Heart right ventricle (tissue), 16 donors: ENCODE measurements at regions of chr9 and their contacts with region 1.

Region 1: GRCh38 chr9:31824860-31825259 is 559.6 kb upstream of the ACO1 start:
- DNase-seq: no peak
- ATAC-seq: no peak
- H3K4me3 ChIP-seq: no peak overlapping the region
- H3K27ac ChIP-seq: no peak overlapping the region
- H3K4me1 ChIP-seq: no peaks in the 10 kb centered on the region
- H3K27me3 ChIP-seq: no peaks in the 10 kb centered on the region
- CTCF ChIP-seq: no peak

Region 2: GRCh38 chr9:31597977-31598376 is 226.9 kb before region 1 on chr9:
- intact Hi-C with region 1: no loop called
- DNase-seq: no peak
- ATAC-seq: no peak
- H3K4me3 ChIP-seq: no peak overlapping the region
- H3K27ac ChIP-seq: no peak overlapping the region
- H3K4me1 ChIP-seq: no peaks in the 10 kb centered on the region
- H3K27me3 ChIP-seq: no peaks in the 10 kb centered on the region
- CTCF ChIP-seq: no peak

Region 3: DNA sequence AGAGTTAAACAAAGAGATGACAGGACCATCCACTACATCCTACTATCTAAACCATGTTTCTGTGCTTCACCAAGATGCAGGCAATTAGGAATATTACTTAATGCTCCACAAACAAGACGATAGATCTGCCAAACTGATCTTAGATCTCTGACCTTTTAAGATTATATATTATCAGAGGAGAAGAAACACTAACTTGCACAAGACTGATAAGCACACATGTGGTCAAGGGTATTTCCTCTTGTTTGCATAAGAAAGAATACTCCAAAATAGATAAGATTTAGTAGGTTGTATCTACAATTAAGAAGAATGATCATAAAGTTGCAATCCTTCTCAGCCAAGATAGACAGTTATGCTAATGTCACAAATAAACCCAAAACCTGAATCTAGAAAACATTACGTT is 41.4 kb before region 1 on chr9:
- intact Hi-C with region 1: loop called in 1 of 10 experiments (anchors 5 kb)
- DNase-seq: no peak
- ATAC-seq: no peak
- H3K4me3 ChIP-seq: no peak overlapping the region
- H3K27ac ChIP-seq: no peak overlapping the region
- H3K4me1 ChIP-seq: no peaks in the 10 kb centered on the region
- H3K27me3 ChIP-seq: no peaks in the 10 kb centered on the region
- CTCF ChIP-seq: no peak

Region 4: DNA sequence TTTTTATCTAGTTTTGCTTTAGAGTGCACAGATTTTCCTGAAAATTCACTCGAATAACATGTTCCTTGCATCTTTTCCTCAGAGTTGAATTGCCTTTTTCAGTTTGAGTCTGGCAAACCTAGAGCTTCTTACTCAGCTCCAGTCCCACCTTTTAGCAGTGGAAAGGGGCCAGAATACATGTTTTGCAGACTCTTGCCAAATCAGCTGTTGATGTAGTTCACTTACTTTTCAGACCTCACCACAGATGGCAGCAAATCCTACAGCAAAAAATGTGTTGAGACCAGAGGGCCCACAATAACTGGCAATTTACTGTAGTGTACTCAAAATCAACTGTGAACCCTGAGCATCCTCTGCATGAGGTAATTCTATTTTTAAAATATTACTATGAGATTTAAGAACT is 14.4 kb after region 1 on chr9:
- intact Hi-C with region 1: loop called in 1 of 10 experiments (anchors 2 kb)
- DNase-seq: no peak
- ATAC-seq: no peak
- H3K4me3 ChIP-seq: no peak overlapping the region
- H3K27ac ChIP-seq: no peak overlapping the region
- H3K4me1 ChIP-seq: no peaks in the 10 kb centered on the region
- H3K27me3 ChIP-seq: no peaks in the 10 kb centered on the region
- CTCF ChIP-seq: no peak

Region 5: DNA sequence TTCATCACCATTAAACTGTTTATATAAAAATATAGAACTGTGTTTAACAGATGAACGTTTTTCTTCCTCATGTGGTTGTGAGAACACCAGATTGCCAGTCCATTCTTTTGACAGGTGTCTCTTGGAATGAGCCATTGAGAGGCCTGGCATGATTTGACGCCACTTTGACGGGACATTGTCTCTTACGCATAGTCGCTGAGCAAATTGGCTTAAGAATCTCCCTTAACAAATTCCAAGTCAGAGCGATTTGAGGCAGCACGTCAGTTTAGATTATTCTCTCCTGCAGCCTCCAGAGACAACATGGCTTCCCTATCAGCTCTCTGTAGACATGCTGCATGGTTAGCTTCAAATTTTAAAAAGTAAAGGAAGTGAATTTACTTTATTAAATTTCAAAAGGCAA is 48.9 kb after region 1 on chr9:
- intact Hi-C with region 1: no loop called
- DNase-seq: no peak
- ATAC-seq: no peak
- H3K4me3 ChIP-seq: no peak overlapping the region
- H3K27ac ChIP-seq: no peak overlapping the region
- H3K4me1 ChIP-seq: no peaks in the 10 kb centered on the region
- H3K27me3 ChIP-seq: no peaks in the 10 kb centered on the region
- CTCF ChIP-seq: no peak